AG04449 (cell line): ENCODE measurements at regions of chr2 and their contacts with region 1.

Region 1: DNA sequence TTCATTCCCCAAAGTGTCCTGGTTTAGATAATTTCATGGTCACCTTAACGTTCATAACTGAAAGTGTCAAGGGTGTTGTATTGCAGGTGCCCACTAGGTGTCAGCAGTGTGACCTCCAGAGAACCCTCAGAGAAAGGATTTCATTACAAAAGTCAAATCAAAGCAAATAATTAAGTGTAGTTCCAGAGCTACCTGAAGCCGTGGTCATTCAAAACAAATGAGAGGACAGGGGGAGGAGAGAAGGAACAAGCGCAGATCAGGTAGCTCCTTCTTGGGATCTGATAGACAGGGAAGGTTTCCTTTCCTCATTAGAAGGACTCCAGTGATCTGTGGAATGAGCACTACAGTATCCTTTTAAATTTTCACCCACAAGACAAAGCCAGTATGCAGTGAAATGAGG is at the start of gene SLC9A4:
- DNase-seq: no peak
- H3K4me3 ChIP-seq: no peak within 1 kb of the TSS
- CTCF ChIP-seq: peak; percentile 78

Region 2: DNA sequence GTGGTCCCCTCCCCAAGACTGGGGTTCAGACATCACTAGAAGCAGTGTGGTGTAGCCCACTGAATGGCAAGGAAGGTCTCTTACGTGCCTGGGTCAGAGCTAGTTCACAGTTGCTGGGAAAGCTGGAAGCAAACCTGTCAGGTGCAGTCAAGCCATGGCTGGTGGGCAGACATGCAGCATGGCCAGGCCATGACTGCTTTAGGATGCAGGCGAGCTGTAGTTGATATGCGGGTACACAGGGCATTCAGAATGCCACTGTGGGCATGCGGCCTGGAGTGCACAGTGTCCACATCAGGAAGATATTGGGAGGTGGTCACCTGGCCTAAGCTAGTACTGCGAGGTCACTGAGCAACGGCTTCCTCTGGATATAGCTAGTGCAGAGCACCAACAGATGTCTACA is 11.8 kb before region 1 on chr2:
- CTCF ChIA-PET with region 1: interaction called, 10 read pairs
- POLR2A ChIA-PET with region 1: no interaction called
- DNase-seq: no peak
- H3K4me3 ChIP-seq: no peak overlapping the region
- CTCF ChIP-seq: no peak

Region 3: DNA sequence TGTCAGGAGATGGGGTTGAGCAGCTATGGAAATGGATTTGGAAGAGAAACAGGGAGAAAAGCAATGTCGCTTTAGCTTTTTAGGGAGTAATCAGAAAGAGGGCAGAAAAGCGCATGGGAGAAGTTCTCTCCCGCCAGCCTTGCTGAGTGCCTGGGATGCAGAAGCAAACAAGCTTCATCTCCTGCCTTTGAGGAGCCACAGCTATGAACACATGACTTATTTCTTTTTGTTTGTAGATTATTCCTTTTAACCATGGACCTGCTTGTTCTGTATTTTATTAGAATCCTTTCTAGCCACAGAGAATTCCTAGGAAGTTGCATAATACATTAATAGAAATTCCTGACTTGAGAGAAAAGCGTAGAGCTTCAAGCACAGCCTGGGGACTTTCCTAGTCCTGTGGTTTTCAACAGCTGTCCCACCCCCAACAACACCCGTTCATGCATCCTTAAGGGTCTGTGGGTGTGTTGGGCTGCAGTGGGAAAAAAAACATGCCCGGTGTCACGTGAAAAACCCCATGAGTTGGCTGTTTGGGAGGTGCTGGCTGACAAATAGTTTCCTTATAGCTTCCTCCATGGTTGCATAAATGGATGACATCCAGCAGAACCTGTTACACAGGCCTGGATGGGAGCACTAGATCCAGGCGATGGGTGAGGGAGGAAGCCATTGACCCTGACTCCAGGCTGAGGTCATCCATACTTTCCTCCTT is 14.9 kb after region 1 on chr2:
- CTCF ChIA-PET with region 1: interaction called, 47 read pairs
- POLR2A ChIA-PET with region 1: no interaction called
- DNase-seq: peak; percentile 37
- H3K4me3 ChIP-seq: no peak overlapping the region
- CTCF ChIP-seq: no peak

Region 4: DNA sequence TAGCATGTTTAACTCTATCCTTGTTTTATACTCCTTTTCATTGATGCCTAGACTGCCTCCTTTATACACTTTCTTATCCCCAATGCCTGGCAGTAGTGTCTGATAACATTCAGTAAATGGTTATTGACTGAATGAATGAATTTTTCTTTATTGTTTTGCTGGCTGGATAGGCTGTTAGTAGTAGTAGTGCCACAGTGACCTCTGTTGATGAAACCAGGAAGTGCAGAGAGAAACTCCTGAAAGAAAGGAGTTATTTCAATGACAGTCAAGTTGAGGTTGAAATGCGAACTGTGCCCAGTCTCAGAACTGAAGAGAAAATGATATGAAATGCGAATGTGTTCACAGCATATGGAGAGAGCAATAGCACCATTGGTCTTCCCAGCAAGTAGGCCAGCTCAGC is 119.6 kb after region 1 on chr2:
- CTCF ChIA-PET with region 1: interaction called, 17 read pairs
- POLR2A ChIA-PET with region 1: no interaction called
- DNase-seq: no peak
- H3K4me3 ChIP-seq: no peak overlapping the region
- CTCF ChIP-seq: peak; percentile 8

Region 5: DNA sequence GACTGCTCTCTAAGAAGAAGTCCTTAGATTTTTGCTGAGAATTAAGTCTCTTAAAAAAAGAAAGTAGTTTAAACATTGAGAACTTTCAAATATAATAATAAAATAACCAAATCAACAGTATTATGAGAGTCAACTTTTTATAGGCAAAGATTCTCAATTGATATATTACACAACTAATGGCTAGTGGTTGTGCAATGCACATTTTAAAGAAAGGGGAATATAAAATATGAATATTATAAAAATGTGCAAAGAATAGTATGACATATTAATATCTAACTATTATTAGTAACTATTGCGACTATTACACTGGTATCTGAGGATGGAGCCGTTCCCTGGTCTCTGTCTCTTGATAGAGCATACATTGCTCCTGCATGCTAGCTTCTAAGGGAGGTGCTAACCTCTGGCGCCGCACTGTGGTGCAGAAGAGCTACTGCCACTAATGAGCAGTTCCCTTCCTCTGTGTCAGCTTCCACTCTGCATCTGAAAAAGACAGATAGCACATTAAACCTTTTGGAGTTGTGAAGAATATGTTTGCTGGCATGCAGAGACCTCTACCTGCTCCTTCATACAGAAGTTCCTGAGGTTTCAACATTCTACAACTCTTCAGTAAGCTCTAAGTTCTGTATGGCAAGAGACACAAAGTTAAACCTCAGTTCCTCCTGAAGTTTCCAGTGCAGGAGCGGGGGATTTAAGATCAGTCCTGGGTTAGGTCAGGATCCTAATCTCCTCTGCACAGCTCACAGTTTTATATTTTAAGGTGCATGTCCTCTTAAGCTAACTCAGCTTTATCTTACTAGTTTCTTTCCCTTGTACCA is 142.8 kb after region 1 on chr2:
- CTCF ChIA-PET with region 1: interaction called, 194 read pairs
- POLR2A ChIA-PET with region 1: interaction called, 4 read pairs
- DNase-seq: peak; percentile 9
- H3K4me3 ChIP-seq: no peak overlapping the region
- CTCF ChIP-seq: peak; percentile 93

Region 6: DNA sequence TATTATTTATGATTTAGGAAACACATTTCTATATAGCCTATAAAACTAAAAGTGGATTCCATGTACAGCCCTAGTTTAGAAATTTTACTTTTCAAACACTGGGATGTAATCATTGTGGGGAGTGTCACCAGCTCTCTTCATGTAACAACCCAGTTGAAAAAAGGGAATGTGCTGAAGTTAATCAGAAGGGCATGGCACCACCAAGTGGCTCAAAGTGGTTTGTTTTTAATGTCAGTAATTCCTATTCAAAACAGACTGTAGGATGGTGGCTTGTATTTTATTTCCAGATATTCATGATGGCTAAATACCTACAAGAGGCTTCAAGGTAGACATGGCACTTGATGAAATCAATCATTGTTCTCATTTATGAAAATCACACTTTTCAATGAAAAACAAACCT is 230.7 kb after region 1 on chr2:
- CTCF ChIA-PET with region 1: interaction called, 16 read pairs
- POLR2A ChIA-PET with region 1: no interaction called
- DNase-seq: no peak
- H3K4me3 ChIP-seq: no peak overlapping the region
- CTCF ChIP-seq: no peak